GM10248 (cell line): ENCODE measurements at regions of chr12 and their contacts with region 1.

Region 1: GRCh38 chr12:9032202-9033178 is 43.1 kb downstream of the KLRG1 start:
- DNase-seq: peak; percentile 31
- CTCF ChIP-seq: no peak

Region 2: GRCh38 chr12:8949342-8950220 is 82.9 kb before region 1 on chr12 and contains the start of gene M6PR:
- CTCF ChIA-PET with region 1: interaction called, 17 read pairs
- POLR2A ChIA-PET with region 1: no interaction called
- DNase-seq: peak; percentile 92
- CTCF ChIP-seq: peak; percentile 77

Region 3: DNA sequence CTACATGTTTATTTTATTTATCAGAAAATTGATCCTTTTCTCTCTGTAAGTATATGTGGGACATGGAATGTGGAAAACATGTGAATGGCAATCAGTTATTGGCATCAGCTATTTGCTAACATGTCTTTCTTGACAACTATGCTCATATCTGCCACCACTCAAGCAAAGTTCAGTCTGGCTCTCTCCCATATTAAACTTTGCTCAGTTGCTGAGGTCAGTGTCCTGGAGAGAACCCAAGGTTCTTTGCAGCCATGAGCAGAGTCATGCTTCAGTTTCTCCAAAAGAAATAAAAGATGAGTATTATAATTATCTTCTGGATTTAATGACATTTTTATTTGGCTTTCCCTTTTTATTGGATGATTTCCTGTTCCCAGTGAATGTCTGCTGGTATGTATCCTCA is 40.6 kb after region 1 on chr12:
- CTCF ChIA-PET with region 1: no interaction called
- POLR2A ChIA-PET with region 1: no interaction called
- DNase-seq: no peak
- CTCF ChIP-seq: no peak